ENCODE measurements at regions of chr1 and their contacts with region 1.

Region 1: DNA sequence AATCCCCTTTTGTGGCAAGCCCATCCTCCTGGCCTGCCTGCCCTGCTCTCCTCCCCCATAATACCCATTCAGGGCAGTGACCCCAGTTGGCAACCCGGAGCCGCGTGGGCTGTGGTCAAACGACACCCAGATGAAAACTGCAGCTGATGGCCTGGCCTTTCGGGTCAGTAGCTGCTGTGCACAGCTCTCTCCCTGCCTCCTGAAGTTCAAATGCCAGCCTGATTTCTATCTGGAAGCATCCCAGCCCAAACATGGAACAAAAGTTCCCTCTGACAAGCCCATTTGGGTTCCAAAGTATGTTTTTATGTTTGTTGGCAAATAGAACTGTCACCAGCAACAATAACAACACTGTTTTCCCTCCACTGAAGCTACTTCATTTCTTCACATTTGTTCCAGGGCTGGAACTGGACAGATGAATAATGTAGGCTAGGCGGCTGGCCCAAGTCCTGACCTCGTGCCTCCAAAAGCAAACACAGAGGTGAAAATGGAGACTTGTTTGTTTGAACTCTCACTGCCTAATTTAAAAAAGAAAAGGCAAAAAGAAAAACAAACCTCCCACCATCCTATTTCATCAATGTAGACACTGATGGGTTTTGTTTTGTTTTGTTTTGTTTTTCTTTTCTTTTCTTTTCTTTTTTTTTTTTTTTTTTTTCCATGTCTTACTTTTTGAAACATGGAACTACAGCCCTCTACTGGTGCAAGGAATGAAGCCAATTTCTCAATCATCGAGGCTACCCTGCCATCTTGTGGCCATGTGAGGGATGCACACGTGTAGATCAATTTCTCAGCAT is 179.0 kb downstream of the ADSS2 start:
- H3K4me3 Mint-ChIP-seq: no peak overlapping the region
- H3K27ac Mint-ChIP-seq: peak overlapping the region; percentile 20
- H3K4me1 Mint-ChIP-seq: peaks cover 4% of the 10 kb centered on the region
- H3K27me3 Mint-ChIP-seq: peaks cover 4% of the 10 kb centered on the region

Region 2: DNA sequence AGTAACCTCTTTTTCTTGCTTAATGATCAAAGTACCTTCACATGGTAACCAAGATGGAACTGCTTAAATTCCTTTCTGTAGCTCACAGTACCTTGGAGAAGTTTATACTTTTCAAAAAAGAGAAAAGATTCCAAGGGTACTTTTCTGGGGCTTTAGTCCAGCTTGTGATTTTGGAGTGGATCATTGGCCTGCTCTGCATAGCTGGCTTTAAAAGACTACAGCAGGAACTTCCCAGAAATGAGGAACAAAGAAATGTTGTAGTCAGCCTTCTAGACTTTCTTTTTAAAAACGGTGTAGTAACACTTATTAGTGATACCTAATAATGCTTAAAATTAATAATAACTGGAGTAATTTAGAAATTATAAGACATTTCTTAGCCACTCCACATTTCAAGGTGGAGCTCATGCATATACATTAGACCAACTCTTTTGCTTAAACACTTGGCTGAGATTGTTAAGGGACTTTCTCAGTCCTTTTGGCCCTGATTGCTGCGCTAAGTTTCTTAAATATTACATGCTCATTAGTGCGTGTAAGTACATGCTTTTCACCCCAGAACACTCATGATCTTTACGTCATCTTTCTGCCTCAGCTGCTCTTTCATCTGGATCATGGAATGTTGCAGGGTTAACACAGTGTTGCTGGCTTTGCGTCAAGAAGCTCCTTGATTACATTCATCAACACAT is 959.6 kb before region 1 on chr1:
- intact Hi-C with region 1: no loop called
- H3K4me3 Mint-ChIP-seq: no peak overlapping the region
- H3K27ac Mint-ChIP-seq: peak overlapping the region; percentile 86
- H3K4me1 Mint-ChIP-seq: peaks cover 46% of the 10 kb centered on the region
- H3K27me3 Mint-ChIP-seq: no peaks in the 10 kb centered on the region

Region 3: GRCh38 chr1:243343970-243344937 is 928.4 kb before region 1 on chr1:
- intact Hi-C with region 1: loop called (anchors 2 kb)
- H3K4me3 Mint-ChIP-seq: no peak overlapping the region
- H3K27ac Mint-ChIP-seq: no peak overlapping the region
- H3K4me1 Mint-ChIP-seq: peaks cover 5% of the 10 kb centered on the region
- H3K27me3 Mint-ChIP-seq: no peaks in the 10 kb centered on the region

Region 4: DNA sequence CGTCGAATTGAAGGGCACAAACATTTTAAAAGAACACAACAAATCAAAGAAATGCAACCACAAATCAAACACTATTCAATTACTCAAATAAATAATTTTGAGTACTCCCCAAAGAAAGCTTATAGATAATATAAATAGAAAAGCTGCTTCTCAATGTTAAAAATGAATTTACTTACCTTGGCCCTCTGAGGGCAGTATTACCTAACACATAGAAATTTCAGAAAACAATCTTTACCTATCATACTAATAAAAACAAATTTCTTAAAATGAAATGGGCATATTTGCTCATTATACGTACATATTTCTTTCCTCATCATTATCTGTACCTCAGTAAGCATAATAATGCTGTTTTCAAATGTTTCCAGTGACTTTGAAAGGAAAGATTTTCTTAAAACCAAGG is 564.5 kb before region 1 on chr1:
- intact Hi-C with region 1: loop called (anchors 1 kb)
- H3K4me3 Mint-ChIP-seq: no peak overlapping the region
- H3K27ac Mint-ChIP-seq: no peak overlapping the region
- H3K4me1 Mint-ChIP-seq: peaks cover 12% of the 10 kb centered on the region
- H3K27me3 Mint-ChIP-seq: no peaks in the 10 kb centered on the region

Region 5: DNA sequence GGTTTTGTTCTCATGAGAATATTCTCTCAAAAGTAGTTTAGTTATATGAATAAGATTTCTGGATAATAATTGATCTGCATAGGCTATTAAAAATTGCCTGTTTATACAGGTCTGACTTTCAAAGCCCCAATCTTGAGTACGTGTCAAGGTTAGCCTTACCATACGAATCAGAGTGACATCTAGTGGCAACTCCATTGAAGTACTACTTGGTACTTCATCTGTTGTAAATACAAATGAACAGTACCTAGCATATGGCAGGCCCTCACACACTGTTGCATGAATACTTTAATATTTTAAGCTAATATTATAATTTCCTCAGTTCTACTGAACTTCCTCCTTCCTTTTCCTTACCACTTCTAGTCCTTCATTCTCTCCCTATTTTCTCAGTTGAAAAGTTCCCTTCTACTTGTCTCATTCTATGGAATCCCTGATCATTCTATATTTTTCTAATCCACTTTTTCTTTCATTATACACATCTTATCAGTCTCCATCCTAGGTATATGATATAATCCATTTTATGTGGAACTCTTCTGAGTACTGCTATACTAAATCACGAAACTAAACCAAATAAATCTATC is 523.9 kb before region 1 on chr1:
- intact Hi-C with region 1: loop called (anchors 5 kb)
- H3K4me3 Mint-ChIP-seq: no peak overlapping the region
- H3K27ac Mint-ChIP-seq: no peak overlapping the region
- H3K4me1 Mint-ChIP-seq: peaks cover 6% of the 10 kb centered on the region
- H3K27me3 Mint-ChIP-seq: no peaks in the 10 kb centered on the region

Region 6: GRCh38 chr1:243850452-243851256 is 422.0 kb before region 1 on chr1:
- intact Hi-C with region 1: loop called (anchors 10 kb)
- H3K4me3 Mint-ChIP-seq: peak overlapping the region; percentile 77
- H3K27ac Mint-ChIP-seq: peak overlapping the region; percentile 76
- H3K4me1 Mint-ChIP-seq: peaks cover 15% of the 10 kb centered on the region
- H3K27me3 Mint-ChIP-seq: peaks cover 27% of the 10 kb centered on the region

Region 7: GRCh38 chr1:243882276-243882675 is 390.4 kb before region 1 on chr1:
- intact Hi-C with region 1: no loop called
- H3K4me3 Mint-ChIP-seq: no peak overlapping the region
- H3K27ac Mint-ChIP-seq: no peak overlapping the region
- H3K4me1 Mint-ChIP-seq: no peaks in the 10 kb centered on the region
- H3K27me3 Mint-ChIP-seq: peaks cover 7% of the 10 kb centered on the region

Region 8: DNA sequence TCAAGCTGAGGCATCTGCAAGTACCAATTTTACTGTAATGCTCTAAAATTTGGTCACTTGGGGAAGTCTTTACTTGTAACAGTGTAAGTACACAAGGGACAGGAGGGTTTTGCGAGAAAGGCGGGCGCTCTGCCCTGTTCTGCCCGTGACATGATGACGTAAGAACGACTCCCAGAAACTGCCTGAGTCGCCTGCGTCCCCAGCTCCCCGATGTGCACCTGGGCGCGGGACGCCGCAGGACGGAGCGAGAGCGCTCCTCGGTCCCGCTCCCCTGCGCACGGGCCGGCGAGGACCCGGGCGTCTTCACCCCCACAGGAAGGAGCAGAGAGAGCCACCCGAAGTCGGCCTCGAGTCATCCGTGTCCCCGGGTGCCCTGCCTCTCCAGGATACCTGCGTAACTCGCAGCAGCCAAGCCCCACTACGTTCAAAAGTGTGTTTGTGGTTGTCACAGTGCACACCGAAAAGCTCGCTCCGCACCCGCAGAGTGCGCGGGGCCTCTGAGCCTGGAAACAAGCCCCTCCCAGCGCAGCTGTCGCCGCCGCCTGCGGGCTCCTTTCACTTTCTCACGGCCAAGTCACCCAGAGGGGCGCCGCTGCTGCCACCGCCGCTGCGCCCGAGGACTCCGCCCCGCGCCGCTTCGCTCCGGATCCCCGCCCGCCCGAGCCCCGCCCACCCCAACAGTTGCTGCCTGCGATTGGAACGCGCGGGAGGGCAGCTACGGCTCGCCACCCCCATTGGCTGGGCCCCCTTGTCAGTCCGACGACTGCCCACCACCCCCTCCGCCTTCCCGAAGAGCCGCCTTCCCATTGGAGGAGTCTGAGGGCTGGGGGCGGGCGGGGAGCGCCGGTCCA is 224.8 kb before region 1 on chr1:
- intact Hi-C with region 1: loop called (anchors 5 kb)
- H3K4me3 Mint-ChIP-seq: peak overlapping the region; percentile 98
- H3K27ac Mint-ChIP-seq: peak overlapping the region; percentile 99
- H3K4me1 Mint-ChIP-seq: peaks cover 17% of the 10 kb centered on the region
- H3K27me3 Mint-ChIP-seq: peaks cover 1% of the 10 kb centered on the region

Region 9: DNA sequence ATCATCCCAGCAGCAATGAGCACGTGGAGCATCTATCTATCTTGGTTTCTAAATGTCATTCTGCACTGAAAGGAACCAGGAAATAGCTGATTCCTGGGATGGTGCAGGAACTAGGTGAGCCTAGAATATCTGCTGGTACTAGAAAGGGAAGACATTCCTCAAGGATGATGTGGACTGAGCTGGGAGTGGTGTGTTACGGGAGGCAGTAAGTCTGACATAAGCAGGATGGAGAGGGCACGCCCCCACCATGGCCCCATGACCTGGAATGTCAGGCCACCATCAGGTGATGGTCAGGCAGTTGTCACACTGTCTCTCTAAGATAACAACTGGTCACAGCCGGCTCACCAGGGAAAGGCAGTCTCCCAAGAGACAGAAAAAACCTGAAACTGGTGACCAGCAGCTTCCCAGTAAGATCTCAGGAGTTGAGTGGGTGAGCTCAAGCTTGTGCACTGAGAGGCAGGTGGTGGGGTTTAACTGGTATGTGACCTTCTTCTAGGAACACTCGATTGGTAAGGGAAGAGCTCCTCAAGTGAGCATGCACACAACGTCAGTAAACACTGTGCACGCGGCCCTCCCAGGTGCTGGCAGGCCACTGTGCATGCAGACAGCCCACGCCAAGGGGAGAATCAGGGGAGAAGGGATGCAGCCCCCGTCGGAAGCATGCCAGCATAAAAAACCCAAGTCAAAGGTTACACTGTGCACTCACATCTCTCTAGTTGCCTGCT is 30.4 kb after region 1 on chr1:
- intact Hi-C with region 1: loop called (anchors 1 kb)
- H3K4me3 Mint-ChIP-seq: no peak overlapping the region
- H3K27ac Mint-ChIP-seq: peak overlapping the region; percentile 87
- H3K4me1 Mint-ChIP-seq: peaks cover 58% of the 10 kb centered on the region
- H3K27me3 Mint-ChIP-seq: no peaks in the 10 kb centered on the region

Region 10: GRCh38 chr1:244319283-244320132 is 46.8 kb after region 1 on chr1:
- intact Hi-C with region 1: no loop called
- H3K4me3 Mint-ChIP-seq: peak overlapping the region; percentile 49
- H3K27ac Mint-ChIP-seq: peak overlapping the region; percentile 97
- H3K4me1 Mint-ChIP-seq: peaks cover 38% of the 10 kb centered on the region
- H3K27me3 Mint-ChIP-seq: no peaks in the 10 kb centered on the region

Region 11: DNA sequence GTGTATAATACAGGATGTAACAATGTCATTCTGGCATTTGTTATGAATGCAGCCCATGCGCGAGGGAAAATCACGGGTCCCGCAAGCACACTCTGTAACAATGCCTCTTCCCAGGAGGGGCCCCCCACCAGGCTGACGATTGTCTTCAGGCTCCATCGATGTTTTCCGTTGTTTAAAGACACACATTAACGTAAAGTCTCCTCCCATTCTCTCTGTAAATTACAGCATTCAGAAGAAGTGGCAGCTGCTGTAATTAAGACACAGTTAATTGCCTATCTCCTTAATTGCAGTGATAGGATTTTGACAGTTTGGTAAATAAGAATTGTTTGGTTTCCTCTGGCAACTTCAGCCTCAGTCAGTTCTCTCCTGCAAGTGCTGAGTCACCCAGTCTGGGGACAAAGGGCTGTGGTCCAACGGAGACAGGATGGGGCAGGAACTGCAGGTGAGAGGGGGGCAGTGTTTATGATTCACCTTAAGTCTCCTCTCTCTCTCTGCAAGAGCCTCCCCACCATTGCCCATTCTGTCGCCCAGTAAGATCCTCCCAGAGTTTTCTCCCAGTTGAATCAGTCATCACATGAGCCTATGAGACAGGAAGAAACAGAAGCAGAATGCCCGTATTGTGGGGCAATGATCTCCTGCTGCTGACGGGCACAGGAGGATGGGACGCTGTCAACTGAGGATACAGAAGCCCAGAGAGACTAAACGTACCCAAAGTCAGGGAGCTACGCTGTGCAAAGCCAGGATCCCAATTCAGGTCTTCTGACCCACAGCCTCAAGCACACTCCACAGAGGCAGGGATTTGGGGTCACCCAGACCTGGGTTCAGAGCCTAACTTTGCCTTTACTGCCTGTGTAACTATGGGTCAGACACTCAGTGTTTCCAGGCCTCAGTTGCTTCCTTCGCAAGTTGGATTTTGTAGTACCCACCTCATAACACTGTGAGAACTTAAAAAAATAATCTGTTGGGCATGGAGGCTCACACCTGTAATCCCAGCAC is 69.1 kb after region 1 on chr1:
- intact Hi-C with region 1: no loop called
- H3K4me3 Mint-ChIP-seq: no peak overlapping the region
- H3K27ac Mint-ChIP-seq: peak overlapping the region; percentile 56
- H3K4me1 Mint-ChIP-seq: peaks cover 25% of the 10 kb centered on the region
- H3K27me3 Mint-ChIP-seq: no peaks in the 10 kb centered on the region

Measured in dendritic cell treated with granulocyte-macrophage colony-stimulating factor and Interleukin-4, amounts not matched to agents 40 ng/mL and 50 ng/mL, for 4 days (primary cell).